B cell (primary cell): ENCODE measurements at regions of chr2 and their contacts with region 1.

Region 1: DNA sequence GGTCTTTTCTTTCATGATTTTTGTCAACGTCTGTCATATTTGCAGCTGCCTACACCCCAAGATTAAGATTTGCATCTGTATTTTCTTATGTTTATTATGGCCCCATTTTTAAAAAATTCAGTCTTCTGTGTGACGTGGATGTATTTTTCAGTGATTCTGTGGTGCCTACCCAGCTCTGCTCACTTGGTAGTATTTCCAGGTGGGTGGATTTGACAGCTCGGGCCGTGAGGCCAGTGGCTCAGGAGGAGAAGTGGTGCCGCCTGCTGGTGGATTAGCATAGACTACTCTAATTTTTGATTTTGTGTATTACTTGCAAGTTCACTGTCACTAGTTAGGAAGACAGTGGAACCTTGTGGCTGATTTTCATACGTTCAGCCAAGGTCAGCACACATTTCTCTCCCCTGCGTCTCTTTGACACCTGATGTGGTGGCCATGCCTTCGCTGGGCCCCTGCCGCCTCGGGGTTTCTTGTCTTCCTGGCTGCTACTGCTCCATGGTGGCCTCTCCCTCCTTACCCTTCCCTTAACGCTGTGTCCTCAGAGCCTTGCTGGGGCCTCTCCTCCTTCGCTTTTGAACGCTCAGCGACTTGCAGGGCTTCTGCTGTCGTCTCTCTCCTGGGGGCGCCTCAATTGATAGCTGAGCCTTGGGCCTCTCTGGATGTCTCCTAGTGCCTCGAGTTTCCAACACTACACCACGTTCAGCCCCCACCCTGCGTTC is 89.3 kb downstream of the DGKD start:
- DNase-seq: peak; percentile 85
- ATAC-seq: peak; percentile 84
- H3K4me3 ChIP-seq: no peak overlapping the region
- H3K4me3 Mint-ChIP-seq: no peak overlapping the region
- H3K27ac ChIP-seq: peak overlapping the region in 1 of 2 donors; percentile 28
- H3K27ac Mint-ChIP-seq: peak overlapping the region; percentile 80
- H3K4me1 ChIP-seq: peaks cover 5 to 8% of the 10 kb centered on the region in 2 donors
- H3K4me1 Mint-ChIP-seq: peaks cover 19% of the 10 kb centered on the region
- H3K27me3 ChIP-seq: no peaks in the 10 kb centered on the region
- H3K27me3 Mint-ChIP-seq: no peaks in the 10 kb centered on the region
- CTCF ChIP-seq: peak; percentile 87

Region 2: GRCh38 chr2:233267516-233268245 is 175.9 kb before region 1 on chr2:
- CTCF ChIA-PET with region 1: interaction called, 11 read pairs
- POLR2A ChIA-PET with region 1: no interaction called
- intact Hi-C with region 1: loop called (anchors 5 kb)
- DNase-seq: peak; percentile 78
- ATAC-seq: peak; percentile 94
- H3K4me3 ChIP-seq: no peak overlapping the region
- H3K4me3 Mint-ChIP-seq: peak overlapping the region; percentile 48
- H3K27ac ChIP-seq: peak overlapping the region; percentile 57 to 73
- H3K27ac Mint-ChIP-seq: peak overlapping the region; percentile 75
- H3K4me1 ChIP-seq: peaks cover 30 to 38% of the 10 kb centered on the region in 2 donors
- H3K4me1 Mint-ChIP-seq: peaks cover 49% of the 10 kb centered on the region
- H3K27me3 ChIP-seq: no peaks in the 10 kb centered on the region
- H3K27me3 Mint-ChIP-seq: no peaks in the 10 kb centered on the region
- CTCF ChIP-seq: no peak

Region 3: GRCh38 chr2:233404222-233404621 is 39.4 kb before region 1 on chr2:
- CTCF ChIA-PET with region 1: interaction called, 426 read pairs
- POLR2A ChIA-PET with region 1: interaction called, 3 read pairs
- intact Hi-C with region 1: loop called (anchors 1 kb)
- DNase-seq: peak; percentile 82
- ATAC-seq: peak; percentile 89
- H3K4me3 ChIP-seq: no peak overlapping the region
- H3K4me3 Mint-ChIP-seq: no peak overlapping the region
- H3K27ac ChIP-seq: peak overlapping the region in 1 of 2 donors; percentile 69
- H3K27ac Mint-ChIP-seq: peak overlapping the region; percentile 82
- H3K4me1 ChIP-seq: peaks cover 25 to 28% of the 10 kb centered on the region in 2 donors
- H3K4me1 Mint-ChIP-seq: peaks cover 46% of the 10 kb centered on the region
- H3K27me3 ChIP-seq: no peaks in the 10 kb centered on the region
- H3K27me3 Mint-ChIP-seq: no peaks in the 10 kb centered on the region
- CTCF ChIP-seq: peak; percentile 88

Region 4: DNA sequence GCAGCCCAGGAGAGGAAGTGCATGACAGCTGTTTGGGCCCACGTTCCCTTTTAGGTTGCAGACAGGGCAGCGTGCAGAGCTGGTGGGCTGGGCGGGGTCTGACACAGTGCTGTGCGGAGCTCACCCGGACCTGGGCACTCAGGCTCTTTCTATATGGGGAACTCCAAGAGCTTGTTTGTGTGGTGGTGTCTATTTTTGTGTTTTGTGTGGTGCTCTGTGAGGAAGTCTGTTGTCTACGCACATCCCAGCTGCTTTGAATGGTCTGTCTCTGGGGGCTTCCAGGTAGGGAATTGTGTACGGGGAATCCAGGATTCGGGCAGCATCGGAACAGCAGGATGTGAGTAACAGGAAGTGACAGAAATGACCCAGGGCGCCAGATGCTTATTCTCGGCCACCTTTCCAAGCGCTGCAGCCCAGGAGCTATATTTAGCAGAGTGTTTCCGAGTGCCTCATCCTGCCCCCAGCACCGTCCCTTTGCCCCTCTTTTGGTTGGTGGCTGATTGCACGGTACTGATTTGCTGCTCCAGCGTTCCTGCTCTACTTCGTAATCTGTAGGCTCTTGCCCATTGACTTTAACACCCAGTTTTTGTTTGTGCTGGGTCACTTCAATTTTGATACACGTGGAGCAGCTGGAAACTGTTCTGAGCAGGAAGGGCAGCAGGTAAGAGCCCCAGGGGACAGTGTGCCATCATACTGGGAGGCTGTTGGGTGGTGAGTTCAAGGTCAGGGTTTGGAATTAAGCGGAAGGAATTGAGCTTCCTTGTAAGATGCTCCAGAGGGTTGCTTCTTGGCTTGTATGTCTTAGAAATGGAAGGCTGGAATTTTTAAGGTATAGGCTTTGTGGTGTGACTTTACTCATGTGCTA is 24.6 kb before region 1 on chr2:
- CTCF ChIA-PET with region 1: interaction called, 95 read pairs
- POLR2A ChIA-PET with region 1: interaction called, 4 read pairs
- intact Hi-C with region 1: loop called (anchors 1 kb)
- DNase-seq: peak; percentile 89
- ATAC-seq: peak; percentile 75
- H3K4me3 ChIP-seq: peak overlapping the region; percentile 45 to 77 (median 67)
- H3K4me3 Mint-ChIP-seq: peak overlapping the region; percentile 91
- H3K27ac ChIP-seq: peak overlapping the region; percentile 91 to 92
- H3K27ac Mint-ChIP-seq: peak overlapping the region; percentile 97
- H3K4me1 ChIP-seq: peaks cover 94 to 97% of the 10 kb centered on the region in 2 donors
- H3K4me1 Mint-ChIP-seq: peaks cover 92% of the 10 kb centered on the region
- H3K27me3 ChIP-seq: no peaks in the 10 kb centered on the region
- H3K27me3 Mint-ChIP-seq: no peaks in the 10 kb centered on the region
- CTCF ChIP-seq: no peak